Mucosa of descending colon (tissue), 3 donors: ENCODE measurements at regions of chr1 and their contacts with region 1.

Region 1: GRCh38 chr1:205255941-205256780 is 28.4 kb downstream of the TMCC2 start:
- DNase-seq: peak; percentile 85 to 95 (median 94)
- ATAC-seq: peak; percentile 97
- H3K4me3 ChIP-seq: no peak overlapping the region
- H3K4me1 ChIP-seq: no peaks in the 10 kb centered on the region
- CTCF ChIP-seq: peak; percentile 86

Region 2: DNA sequence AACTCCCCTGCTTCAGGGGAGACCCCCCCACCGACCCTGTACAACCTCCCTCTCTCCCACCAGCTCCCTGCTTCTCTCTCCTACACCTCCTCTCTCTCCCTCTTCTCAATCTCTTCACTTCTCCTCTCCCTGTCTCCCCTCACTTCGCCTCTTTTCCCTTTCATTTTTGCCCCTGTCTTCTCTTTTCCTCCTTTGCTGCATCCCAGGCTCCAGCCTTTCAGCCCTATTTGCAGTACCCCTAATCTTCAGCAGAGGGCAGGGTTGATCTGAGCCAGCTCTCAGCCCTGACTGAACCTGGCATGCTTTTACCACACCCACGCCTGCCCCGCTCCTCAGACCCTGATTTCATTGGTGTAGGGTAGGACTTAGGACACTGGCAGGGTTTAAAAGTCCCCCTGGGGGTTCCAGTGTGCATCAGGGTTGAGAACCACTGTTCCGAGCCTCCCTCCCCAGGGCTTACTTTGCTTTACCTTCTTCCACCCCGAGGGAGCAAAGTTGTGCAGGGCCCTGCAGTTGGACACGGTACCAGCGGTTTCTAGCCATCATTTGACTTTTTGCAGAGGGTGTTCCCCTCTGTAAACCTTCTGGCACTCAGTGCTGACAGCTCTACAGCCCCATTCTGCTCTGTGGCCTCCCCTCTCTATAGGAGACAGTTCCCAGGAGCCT is 280.5 kb before region 1 on chr1:
- intact Hi-C with region 1: loop called in 1 of 2 experiments (anchors 10 kb)
- DNase-seq: peak in 2 of 3 donors; percentile 36 to 76
- ATAC-seq: peak; percentile 76
- H3K4me3 ChIP-seq: no peak overlapping the region
- H3K4me1 ChIP-seq: no peaks in the 10 kb centered on the region
- CTCF ChIP-seq: peak; percentile 66

Region 3: DNA sequence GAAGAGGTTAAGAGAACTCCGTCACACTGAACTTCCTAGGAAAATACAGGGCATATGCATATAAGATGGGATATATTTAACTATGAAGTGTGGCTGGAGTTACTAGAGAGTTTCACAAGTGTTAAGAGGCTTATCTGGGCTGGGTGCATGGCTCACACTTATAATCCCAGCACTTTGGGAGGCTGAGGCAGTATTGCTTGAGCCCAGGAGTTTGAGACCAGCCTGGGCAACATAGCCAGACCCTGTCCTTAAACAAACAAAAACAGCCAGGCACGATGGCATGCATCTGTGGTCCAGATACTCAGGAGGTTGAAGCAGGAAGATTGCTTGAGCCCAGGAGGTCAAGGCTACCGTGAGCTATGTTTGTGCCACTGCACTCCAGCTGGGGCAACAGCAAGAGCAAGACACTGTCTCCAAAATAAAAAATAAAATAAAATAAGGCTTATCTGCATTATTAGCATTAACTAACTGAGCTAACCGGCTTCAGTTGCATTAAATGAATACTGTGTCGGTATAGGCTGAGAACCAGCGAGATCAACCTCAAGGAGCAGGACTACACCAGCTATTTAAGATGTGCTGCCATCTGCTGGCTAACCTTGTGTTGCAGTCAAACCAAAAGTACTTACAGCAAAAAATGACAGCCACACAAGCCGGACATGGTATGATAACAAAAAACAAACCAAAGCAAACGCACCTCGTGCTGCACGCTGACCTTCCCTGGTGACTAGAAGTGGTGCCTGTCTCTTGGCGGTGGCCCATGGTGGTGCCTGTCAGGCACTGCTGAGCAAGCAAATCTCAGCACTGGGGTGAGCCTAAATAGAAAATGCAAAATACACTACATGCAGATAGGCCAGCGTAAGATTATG is 114.7 kb before region 1 on chr1:
- intact Hi-C with region 1: loop called in 1 of 2 experiments (anchors 10 kb)
- DNase-seq: peak in 2 of 3 donors; percentile 52 to 93
- ATAC-seq: peak; percentile 88
- H3K4me3 ChIP-seq: no peak overlapping the region
- H3K4me1 ChIP-seq: no peaks in the 10 kb centered on the region
- CTCF ChIP-seq: peak; percentile 52